ENCODE measurements at regions of chr6 and their contacts with region 1.

Region 1: DNA sequence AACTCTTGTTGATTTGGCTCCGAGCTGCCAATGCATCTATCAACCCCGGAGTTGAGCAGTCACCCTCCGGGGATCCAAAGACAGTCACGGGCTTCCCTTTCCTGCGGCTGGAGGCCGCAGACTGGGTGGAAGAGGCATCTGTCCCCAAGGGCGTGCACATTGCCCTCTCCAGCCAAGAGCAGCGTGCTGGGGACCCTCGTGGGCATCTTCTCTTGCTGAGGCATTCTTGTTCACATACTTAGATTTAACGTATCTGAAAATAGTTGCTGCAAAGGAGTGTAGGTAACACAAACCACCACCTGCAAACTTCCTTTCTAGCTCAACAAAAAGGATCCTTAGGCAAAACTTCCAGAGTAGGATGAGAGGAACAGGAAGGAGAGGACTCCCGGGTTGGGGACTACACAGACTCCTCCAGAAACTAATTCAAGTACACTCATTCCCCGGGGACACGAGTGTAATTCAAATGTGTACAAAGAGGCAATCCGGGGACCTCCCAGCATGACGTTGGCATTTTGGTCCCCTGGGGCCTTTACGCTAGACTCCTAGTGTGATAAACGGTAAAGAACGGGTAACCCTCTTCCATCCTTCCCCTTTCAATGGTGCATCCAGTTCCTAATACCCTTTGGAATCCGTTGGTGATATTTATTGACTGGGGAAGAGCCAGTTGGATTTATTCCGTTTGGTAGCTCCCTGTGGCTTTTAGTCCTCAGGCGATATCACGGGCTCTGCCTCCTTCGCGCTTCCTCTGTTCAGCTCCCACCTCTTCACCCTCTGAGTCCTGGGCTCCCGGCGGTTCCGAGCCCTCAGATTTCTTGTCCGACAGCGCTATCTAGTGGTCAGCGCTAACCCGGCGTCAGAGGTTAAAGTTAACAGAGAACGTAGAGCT is 2.7 kb upstream of the COL12A1 start:
- DNase-seq: peak; percentile 63 to 83
- H3K4me3 ChIP-seq: no peak overlapping the region
- H3K27ac ChIP-seq: no peak overlapping the region
- H3K4me1 ChIP-seq: peaks cover 28% of the 10 kb centered on the region; the same call in 1 of the 2 replicates
- H3K27me3 ChIP-seq: 0 out of 2 replicates have a peak, but pooled peaks cover 4% of the 10 kb centered on the region
- CTCF ChIP-seq: peak; percentile 88

Region 2: GRCh38 chr6:73675466-73676098 is 1533.0 kb before region 1 on chr6:
- CTCF ChIA-PET with region 1: interaction called, 3 read pairs
- POLR2A ChIA-PET with region 1: no interaction called
- intact Hi-C with region 1: loop called (anchors 10 kb)
- DNase-seq: peak; percentile 70 to 81
- H3K4me3 ChIP-seq: no peak overlapping the region
- H3K27ac ChIP-seq: no peak overlapping the region
- H3K4me1 ChIP-seq: peaks cover 16% of the 10 kb centered on the region
- H3K27me3 ChIP-seq: no peaks in the 10 kb centered on the region
- CTCF ChIP-seq: peak; percentile 96

Region 3: DNA sequence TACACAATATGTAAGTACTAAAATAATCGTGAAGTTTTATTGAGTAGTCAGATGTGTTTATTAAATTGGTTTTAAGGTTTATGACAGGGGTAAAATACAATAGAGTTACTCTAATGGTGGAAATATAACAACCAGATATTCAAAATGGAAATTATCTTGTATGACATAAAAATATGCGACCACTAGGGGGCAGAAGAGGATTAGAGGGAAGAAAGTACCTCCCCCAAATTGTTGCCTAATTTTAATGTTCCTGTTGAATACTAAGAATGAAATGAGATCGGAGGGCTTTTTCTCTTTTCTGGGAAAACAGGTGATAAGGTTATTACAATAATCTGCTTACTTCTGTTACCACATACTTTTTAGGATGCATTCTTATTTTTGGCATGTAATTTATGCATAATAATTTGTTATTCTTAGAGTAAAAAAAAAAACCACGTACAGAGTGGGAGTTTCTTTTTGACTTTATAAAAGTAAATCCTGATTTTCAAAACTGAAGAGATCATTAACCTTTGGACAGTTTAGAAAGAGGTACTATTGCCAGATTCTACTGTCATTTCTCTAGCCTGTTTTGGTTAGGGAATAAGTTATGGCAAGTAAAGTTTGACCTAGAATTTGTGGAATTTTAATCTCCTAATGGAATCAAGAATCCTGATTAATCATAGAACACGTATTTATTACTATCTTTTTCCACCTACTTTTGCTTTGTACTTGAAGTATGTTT is 1353.4 kb before region 1 on chr6:
- CTCF ChIA-PET with region 1: interaction called, 3 read pairs
- POLR2A ChIA-PET with region 1: no interaction called
- intact Hi-C with region 1: loop called (anchors 1 kb)
- DNase-seq: no peak
- H3K4me3 ChIP-seq: no peak overlapping the region
- H3K27ac ChIP-seq: no peak overlapping the region
- H3K4me1 ChIP-seq: no peaks in the 10 kb centered on the region
- H3K27me3 ChIP-seq: no peaks in the 10 kb centered on the region
- CTCF ChIP-seq: peak; percentile 91

Region 4: DNA sequence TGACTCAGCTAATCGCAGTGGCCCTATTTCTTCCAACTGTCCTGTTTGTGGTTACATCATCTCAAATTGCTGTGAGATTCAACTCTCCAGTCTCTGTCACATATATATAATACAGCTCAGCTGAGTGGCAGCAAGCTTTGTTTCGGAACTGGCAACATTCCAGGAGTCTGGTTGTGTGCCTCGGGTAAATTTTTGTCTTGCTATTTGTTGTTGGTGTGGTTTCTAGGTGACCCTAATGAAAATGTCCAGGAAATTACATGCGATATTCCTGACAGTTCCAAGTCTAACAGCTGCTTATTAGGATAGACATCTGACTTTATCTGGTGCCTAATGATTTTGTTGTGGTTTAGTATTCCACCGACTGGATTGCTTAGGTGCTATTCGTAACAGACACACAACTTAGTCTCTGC is 930.8 kb before region 1 on chr6:
- CTCF ChIA-PET with region 1: interaction called, 3 read pairs
- POLR2A ChIA-PET with region 1: no interaction called
- intact Hi-C with region 1: loop called (anchors 10 kb)
- DNase-seq: no peak
- H3K4me3 ChIP-seq: no peak overlapping the region
- H3K27ac ChIP-seq: no peak overlapping the region
- H3K4me1 ChIP-seq: no peaks in the 10 kb centered on the region
- H3K27me3 ChIP-seq: no peaks in the 10 kb centered on the region
- CTCF ChIP-seq: no peak

Region 5: GRCh38 chr6:74574794-74575193 is 633.7 kb before region 1 on chr6:
- CTCF ChIA-PET with region 1: no interaction called
- POLR2A ChIA-PET with region 1: no interaction called
- intact Hi-C with region 1: loop called (anchors 5 kb)
- DNase-seq: no peak
- H3K4me3 ChIP-seq: no peak overlapping the region
- H3K27ac ChIP-seq: no peak overlapping the region
- H3K4me1 ChIP-seq: peaks cover 8% of the 10 kb centered on the region
- H3K27me3 ChIP-seq: no peaks in the 10 kb centered on the region
- CTCF ChIP-seq: peak; percentile 69

Region 6: GRCh38 chr6:74899416-74899815 is 309.1 kb before region 1 on chr6:
- CTCF ChIA-PET with region 1: no interaction called
- POLR2A ChIA-PET with region 1: no interaction called
- intact Hi-C with region 1: loop called (anchors 1 kb)
- DNase-seq: peak; percentile 17 to 65
- H3K4me3 ChIP-seq: no peak overlapping the region
- H3K27ac ChIP-seq: no peak overlapping the region
- H3K4me1 ChIP-seq: no peaks in the 10 kb centered on the region
- H3K27me3 ChIP-seq: no peaks in the 10 kb centered on the region
- CTCF ChIP-seq: peak; percentile 66

Region 7: DNA sequence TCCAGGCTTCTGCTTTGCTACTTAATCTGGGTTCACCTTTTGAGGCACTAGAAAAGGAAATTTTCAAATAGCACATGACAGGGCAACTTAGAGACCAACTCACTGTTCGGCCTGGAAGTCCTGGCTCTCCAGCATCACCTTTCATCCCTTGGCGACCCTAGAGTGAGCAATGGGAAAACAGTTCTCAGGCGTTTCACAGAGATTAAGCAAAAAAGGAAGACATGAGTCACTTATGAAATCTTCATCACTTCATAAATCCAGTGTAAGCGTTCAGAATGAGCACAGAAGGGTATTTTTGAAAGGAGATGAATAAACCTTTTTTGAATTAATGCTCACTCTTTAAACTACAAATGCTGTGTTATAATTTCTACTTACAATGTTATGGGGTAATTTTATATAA is 106.6 kb before region 1 on chr6:
- CTCF ChIA-PET with region 1: no interaction called
- POLR2A ChIA-PET with region 1: no interaction called
- intact Hi-C with region 1: loop called (anchors 5 kb)
- DNase-seq: peak in 1 of 2 experiments; percentile 48
- H3K4me3 ChIP-seq: no peak overlapping the region
- H3K27ac ChIP-seq: no peak overlapping the region
- H3K4me1 ChIP-seq: peaks cover 60% of the 10 kb centered on the region
- H3K27me3 ChIP-seq: no peaks in the 10 kb centered on the region
- CTCF ChIP-seq: no peak

Region 8: GRCh38 chr6:75588947-75589346 is 380.4 kb after region 1 on chr6:
- CTCF ChIA-PET with region 1: no interaction called
- POLR2A ChIA-PET with region 1: no interaction called
- intact Hi-C with region 1: no loop called
- DNase-seq: no peak
- H3K4me3 ChIP-seq: no peak overlapping the region
- H3K27ac ChIP-seq: no peak overlapping the region
- H3K4me1 ChIP-seq: no peaks in the 10 kb centered on the region
- H3K27me3 ChIP-seq: no peaks in the 10 kb centered on the region
- CTCF ChIP-seq: no peak

Measured in PC-9 (cell line).